MCF 10A (cell line): ENCODE measurements at regions of chr1 and their contacts with region 1.

Region 1: GRCh38 chr1:223133824-223134435 is 9.1 kb downstream of the TLR5 start:
- DNase-seq: peak; percentile 94
- H3K4me3 Mint-ChIP-seq: peak overlapping the region; percentile 63
- H3K27ac Mint-ChIP-seq: no peak overlapping the region
- H3K4me1 Mint-ChIP-seq: peaks cover 45% of the 10 kb centered on the region
- H3K27me3 Mint-ChIP-seq: peaks cover 9% of the 10 kb centered on the region
- CTCF ChIP-seq: no peak

Region 2: DNA sequence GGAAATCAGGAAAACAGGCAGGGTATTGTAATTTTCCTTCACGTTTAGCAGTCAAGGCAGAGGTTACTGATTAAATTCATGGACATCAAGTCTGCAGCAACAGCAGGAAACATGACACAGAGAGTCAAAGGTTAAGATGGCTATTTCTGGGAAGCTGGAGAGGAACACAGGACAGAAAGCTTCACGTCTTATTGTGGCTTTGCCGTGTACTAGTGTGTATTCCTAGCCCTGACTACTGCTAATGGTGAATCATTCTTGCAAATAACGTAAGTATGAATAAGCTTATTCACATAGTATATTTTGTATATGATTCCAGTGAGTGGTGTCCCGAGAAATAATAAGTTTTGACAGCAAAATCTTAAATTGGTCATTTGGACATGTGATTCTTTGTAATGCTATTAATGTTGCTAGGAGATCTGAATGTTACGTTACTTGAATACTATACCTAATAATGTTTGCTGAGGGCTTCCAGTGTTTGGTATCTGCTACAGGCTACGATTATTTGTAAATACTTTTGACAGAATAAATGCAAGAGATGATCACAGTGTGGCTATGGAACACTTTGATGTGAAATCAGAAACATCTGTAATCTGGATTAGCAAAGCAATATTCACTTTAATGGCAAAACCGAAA is 241.7 kb before region 1 on chr1:
- CTCF ChIA-PET with region 1: no interaction called
- POLR2A ChIA-PET with region 1: no interaction called
- intact Hi-C with region 1: no loop called
- DNase-seq: peak; percentile 72
- H3K4me3 Mint-ChIP-seq: no peak overlapping the region
- H3K27ac Mint-ChIP-seq: no peak overlapping the region
- H3K4me1 Mint-ChIP-seq: peaks cover 15% of the 10 kb centered on the region
- H3K27me3 Mint-ChIP-seq: no peaks in the 10 kb centered on the region
- CTCF ChIP-seq: no peak

Region 3: GRCh38 chr1:223097713-223098112 is 36.2 kb before region 1 on chr1:
- CTCF ChIA-PET with region 1: interaction called, 49 read pairs
- POLR2A ChIA-PET with region 1: no interaction called
- intact Hi-C with region 1: no loop called
- DNase-seq: no peak
- H3K4me3 Mint-ChIP-seq: no peak overlapping the region
- H3K27ac Mint-ChIP-seq: no peak overlapping the region
- H3K4me1 Mint-ChIP-seq: no peaks in the 10 kb centered on the region
- H3K27me3 Mint-ChIP-seq: no peaks in the 10 kb centered on the region
- CTCF ChIP-seq: no peak

Region 4: DNA sequence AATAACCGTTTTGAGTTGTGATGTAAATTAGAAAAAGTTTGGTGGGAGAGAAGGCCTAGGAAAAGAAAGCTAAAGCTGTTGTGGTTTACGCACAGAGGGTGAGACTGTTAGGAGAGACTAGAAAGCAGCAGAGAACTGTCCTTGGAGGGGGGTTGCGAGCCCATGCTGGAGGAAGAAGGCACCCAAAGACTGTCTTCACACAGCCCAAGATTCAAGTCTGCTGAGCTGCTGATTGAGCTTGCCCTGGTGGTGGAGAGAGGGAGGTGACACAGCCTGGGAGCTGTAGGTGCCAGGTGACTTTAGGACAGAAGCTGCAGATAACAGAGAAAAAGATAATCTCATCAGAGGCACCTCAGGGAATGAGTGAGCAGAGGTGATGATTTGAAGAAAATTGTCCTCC is 27.4 kb after region 1 on chr1:
- CTCF ChIA-PET with region 1: interaction called, 13 read pairs
- POLR2A ChIA-PET with region 1: interaction called, 3 read pairs
- intact Hi-C with region 1: no loop called
- DNase-seq: no peak
- H3K4me3 Mint-ChIP-seq: no peak overlapping the region
- H3K27ac Mint-ChIP-seq: no peak overlapping the region
- H3K4me1 Mint-ChIP-seq: no peaks in the 10 kb centered on the region
- H3K27me3 Mint-ChIP-seq: no peaks in the 10 kb centered on the region
- CTCF ChIP-seq: no peak

Region 5: DNA sequence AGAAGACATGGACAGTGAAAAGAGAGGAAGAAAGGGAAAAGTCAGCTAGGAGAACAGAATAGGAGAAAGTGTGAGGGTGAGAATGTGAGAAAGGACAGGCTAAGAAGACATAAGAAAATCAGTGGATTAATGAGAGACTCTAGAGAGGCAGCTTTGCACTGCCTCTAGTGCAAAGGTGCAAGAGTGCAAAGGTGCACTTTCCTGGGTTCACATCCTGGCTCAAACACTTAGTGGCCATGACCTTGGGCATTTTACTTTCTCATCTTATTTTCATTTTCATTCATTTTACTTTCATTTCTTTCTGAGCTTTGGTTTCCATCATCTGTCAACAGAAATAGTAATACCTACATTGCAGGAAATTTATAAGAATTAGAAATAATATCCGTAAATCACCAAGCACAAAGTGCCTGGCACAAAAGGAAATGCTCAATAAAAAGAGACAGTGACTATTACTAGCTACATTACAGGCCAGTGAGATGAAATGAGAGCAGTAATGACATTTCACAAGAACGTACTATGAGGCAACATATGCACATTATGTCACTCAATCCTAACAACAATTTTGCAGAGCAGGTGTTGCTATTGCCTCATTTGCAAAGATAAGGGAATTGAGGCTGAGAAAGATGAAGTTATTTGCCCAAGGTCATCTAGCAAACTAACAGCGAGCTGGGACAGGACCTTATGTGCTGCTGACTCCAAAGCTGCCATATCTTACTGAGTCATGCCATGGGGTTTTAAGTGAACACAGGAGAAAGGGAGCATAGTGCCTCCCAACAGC is 116.1 kb after region 1 on chr1:
- CTCF ChIA-PET with region 1: interaction called, 55 read pairs
- POLR2A ChIA-PET with region 1: interaction called, 9 read pairs
- intact Hi-C with region 1: loop called (anchors 2 kb)
- DNase-seq: peak; percentile 82
- H3K4me3 Mint-ChIP-seq: no peak overlapping the region
- H3K27ac Mint-ChIP-seq: no peak overlapping the region
- H3K4me1 Mint-ChIP-seq: peaks cover 14% of the 10 kb centered on the region
- H3K27me3 Mint-ChIP-seq: no peaks in the 10 kb centered on the region
- CTCF ChIP-seq: no peak

Region 6: GRCh38 chr1:223358826-223359225 is 224.9 kb after region 1 on chr1:
- CTCF ChIA-PET with region 1: interaction called, 171 read pairs
- POLR2A ChIA-PET with region 1: interaction called, 17 read pairs
- intact Hi-C with region 1: loop called (anchors 1 kb)
- DNase-seq: peak; percentile 58
- H3K4me3 Mint-ChIP-seq: no peak overlapping the region
- H3K27ac Mint-ChIP-seq: no peak overlapping the region
- H3K4me1 Mint-ChIP-seq: peaks cover 7% of the 10 kb centered on the region
- H3K27me3 Mint-ChIP-seq: peaks cover 51% of the 10 kb centered on the region
- CTCF ChIP-seq: peak; percentile 24

Region 7: DNA sequence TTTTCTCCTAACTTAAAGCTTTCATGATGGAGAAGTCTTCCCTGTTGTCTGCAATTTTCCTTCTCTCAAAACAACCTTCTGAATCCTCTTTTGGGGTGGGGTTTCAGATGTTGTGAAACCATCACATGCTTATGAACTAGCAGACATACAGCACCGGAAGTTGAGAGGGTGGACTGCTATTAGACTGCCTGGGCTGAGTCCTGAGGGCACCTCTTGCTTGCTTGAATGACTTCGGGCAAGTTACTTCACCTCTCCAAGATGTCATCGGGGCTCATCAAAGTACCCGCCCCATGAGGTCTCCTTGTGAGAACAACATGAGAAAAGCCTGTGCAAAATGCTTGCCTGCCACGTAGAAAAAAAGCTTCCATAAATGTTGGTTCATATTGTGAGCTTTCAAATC is 348.8 kb after region 1 on chr1:
- CTCF ChIA-PET with region 1: interaction called, 15 read pairs
- POLR2A ChIA-PET with region 1: no interaction called
- intact Hi-C with region 1: no loop called
- DNase-seq: peak; percentile 39
- H3K4me3 Mint-ChIP-seq: no peak overlapping the region
- H3K27ac Mint-ChIP-seq: no peak overlapping the region
- H3K4me1 Mint-ChIP-seq: peaks cover 8% of the 10 kb centered on the region
- H3K27me3 Mint-ChIP-seq: peaks cover 23% of the 10 kb centered on the region
- CTCF ChIP-seq: no peak

Region 8: GRCh38 chr1:223683586-223684487 is 549.9 kb after region 1 on chr1:
- CTCF ChIA-PET with region 1: interaction called, 324 read pairs
- POLR2A ChIA-PET with region 1: interaction called, 18 read pairs
- intact Hi-C with region 1: loop called (anchors 1 kb)
- DNase-seq: peak; percentile 85
- H3K4me3 Mint-ChIP-seq: no peak overlapping the region
- H3K27ac Mint-ChIP-seq: no peak overlapping the region
- H3K4me1 Mint-ChIP-seq: peaks cover 6% of the 10 kb centered on the region
- H3K27me3 Mint-ChIP-seq: no peaks in the 10 kb centered on the region
- CTCF ChIP-seq: peak; percentile 94